ENCODE measurements at regions of chr15 and their contacts with region 1.

Region 1: DNA sequence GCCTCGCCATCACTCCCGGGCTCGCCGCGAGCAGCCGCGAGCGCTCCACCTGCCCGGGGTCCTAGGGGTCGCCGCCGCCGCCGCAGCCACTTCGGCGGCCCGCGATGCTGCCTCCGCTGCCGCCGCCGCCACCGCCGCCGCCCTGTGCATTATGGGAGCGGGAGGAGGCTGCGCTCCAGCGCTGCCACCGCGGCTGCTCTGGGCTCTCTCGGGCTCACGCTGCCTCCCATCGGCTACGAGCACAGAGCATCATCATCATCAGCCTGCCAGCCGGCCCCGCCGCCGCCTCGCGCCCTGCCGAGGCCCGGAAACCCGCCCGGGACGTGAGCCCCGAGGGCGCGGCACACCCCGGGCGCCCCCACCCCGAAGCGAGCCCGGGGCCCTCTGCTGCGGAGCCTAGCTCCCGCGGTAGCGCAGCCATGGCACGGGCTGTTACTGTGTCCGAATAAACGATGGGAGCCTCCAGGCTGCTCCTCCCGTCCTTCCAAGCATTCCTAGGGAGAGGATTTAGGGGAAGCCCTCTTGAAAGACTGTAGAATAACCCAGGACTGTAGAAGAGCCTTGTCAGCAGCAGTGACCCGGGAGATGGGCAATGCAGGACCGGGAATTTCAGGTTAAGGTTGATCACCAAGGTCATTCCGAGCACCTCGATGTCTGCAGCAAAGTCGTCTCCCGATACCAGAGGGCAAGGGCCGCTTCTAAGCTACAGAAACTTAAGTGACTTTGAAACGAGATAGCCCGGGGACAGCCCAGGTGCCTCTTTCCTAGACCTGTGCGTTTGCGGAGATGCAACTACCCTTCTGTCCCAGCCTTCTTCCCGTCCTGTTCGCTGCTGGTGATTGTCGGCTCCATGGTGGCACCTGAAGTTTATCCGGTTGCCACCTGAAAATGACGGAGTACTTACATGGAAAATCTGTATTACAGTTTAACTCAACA is 579 bp upstream of the MYO5A start:
- DNase-seq: peak; percentile 84
- H3K4me3 Mint-ChIP-seq: peak overlapping the region; percentile 74
- H3K27ac Mint-ChIP-seq: peak overlapping the region; percentile 63
- H3K4me1 Mint-ChIP-seq: peaks cover 34% of the 10 kb centered on the region
- H3K27me3 Mint-ChIP-seq: peaks cover 7% of the 10 kb centered on the region

Region 2: GRCh38 chr15:52331490-52332240 is 197.6 kb before region 1 on chr15:
- CTCF ChIA-PET with region 1: interaction called, 10 read pairs
- POLR2A ChIA-PET with region 1: interaction called, 13 read pairs
- DNase-seq: peak; percentile 78
- H3K4me3 Mint-ChIP-seq: peak overlapping the region; percentile 19
- H3K27ac Mint-ChIP-seq: peak overlapping the region; percentile 79
- H3K4me1 Mint-ChIP-seq: peaks cover 45% of the 10 kb centered on the region
- H3K27me3 Mint-ChIP-seq: no peaks in the 10 kb centered on the region

Region 3: GRCh38 chr15:52466134-52466701 is 63.0 kb before region 1 on chr15:
- CTCF ChIA-PET with region 1: interaction called, 6 read pairs
- POLR2A ChIA-PET with region 1: interaction called, 41 read pairs
- DNase-seq: peak; percentile 67
- H3K4me3 Mint-ChIP-seq: no peak overlapping the region
- H3K27ac Mint-ChIP-seq: peak overlapping the region; percentile 52
- H3K4me1 Mint-ChIP-seq: peaks cover 50% of the 10 kb centered on the region
- H3K27me3 Mint-ChIP-seq: no peaks in the 10 kb centered on the region

Region 4: DNA sequence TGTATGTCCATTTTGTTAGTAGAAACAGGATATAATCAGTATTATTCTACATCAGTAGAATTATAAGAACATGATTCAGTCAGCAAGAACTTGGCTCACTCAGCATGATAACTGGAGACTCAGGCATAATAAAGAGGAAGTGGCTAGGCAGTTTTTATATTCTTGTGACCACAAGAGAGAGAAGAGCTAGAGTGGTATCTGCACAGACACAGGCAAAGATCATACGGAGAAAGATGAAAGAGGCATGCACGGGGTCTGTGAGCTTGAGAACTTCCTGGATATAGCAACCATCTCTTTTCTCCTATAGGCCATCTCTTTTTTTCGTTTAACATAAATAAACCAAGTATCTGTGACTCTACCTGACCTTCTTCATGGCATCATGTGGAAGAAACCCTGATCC is 47.3 kb before region 1 on chr15:
- CTCF ChIA-PET with region 1: interaction called, 3 read pairs
- POLR2A ChIA-PET with region 1: interaction called, 30 read pairs
- DNase-seq: peak; percentile 65
- H3K4me3 Mint-ChIP-seq: peak overlapping the region; percentile 11
- H3K27ac Mint-ChIP-seq: peak overlapping the region; percentile 67
- H3K4me1 Mint-ChIP-seq: peaks cover 64% of the 10 kb centered on the region
- H3K27me3 Mint-ChIP-seq: no peaks in the 10 kb centered on the region

Region 5: GRCh38 chr15:52558196-52558595 is 28.9 kb after region 1 on chr15:
- CTCF ChIA-PET with region 1: interaction called, 9 read pairs
- POLR2A ChIA-PET with region 1: interaction called, 18 read pairs
- DNase-seq: peak; percentile 77
- H3K4me3 Mint-ChIP-seq: peak overlapping the region; percentile 58
- H3K27ac Mint-ChIP-seq: peak overlapping the region; percentile 89
- H3K4me1 Mint-ChIP-seq: peaks cover 64% of the 10 kb centered on the region
- H3K27me3 Mint-ChIP-seq: no peaks in the 10 kb centered on the region

Region 6: DNA sequence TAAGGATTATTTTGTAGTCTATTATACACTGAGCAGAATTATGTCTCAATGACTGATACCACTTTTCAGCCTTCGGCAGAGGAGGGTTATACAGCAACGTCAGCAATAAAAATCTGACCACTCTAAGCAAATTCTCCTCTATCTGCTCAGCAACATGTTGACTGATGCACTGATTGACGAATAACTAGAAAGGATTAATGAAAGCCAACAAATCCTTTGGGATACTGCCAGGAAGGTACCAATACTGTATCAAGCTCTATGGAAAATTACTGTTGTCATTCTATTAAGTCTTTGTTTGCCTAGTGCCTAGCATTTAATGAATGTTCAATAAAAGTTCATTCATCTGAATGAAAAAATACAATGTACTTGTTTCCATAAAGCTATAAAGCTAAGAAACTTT is 34.3 kb after region 1 on chr15:
- CTCF ChIA-PET with region 1: interaction called, 9 read pairs
- POLR2A ChIA-PET with region 1: interaction called, 18 read pairs
- DNase-seq: no peak
- H3K4me3 Mint-ChIP-seq: no peak overlapping the region
- H3K27ac Mint-ChIP-seq: no peak overlapping the region
- H3K4me1 Mint-ChIP-seq: peaks cover 70% of the 10 kb centered on the region
- H3K27me3 Mint-ChIP-seq: no peaks in the 10 kb centered on the region

Measured in activated CD4-positive, alpha-beta memory T cell treated with anti-CD3 and anti-CD28 coated beads, Interleukin-2, amount 10 ng/mL, durations not matched to agents 7 days and 5 days (primary cell).